ENCODE measurements at regions of chr11 and their contacts with region 1.

Region 1: GRCh38 chr11:65027213-65028067 is at the start of gene SNX15:
- DNase-seq: peak; percentile 80
- ATAC-seq: peak; percentile 98
- H3K4me3 ChIP-seq: peak within 1 kb of the TSS; percentile 65
- H3K27ac ChIP-seq: peak within 1 kb of the TSS; percentile 74
- H3K4me1 ChIP-seq: peaks cover 8% of the 10 kb centered on the region; the same call in 1 of the 2 replicates
- H3K27me3 ChIP-seq: no peaks in the 10 kb centered on the region
- CTCF ChIP-seq: peak; percentile 29 to 45 (median 37); a peak in 4 of 6 replicates
- EP300 ChIP-seq: no peak
- POLR2A ChIP-seq: peak; percentile 78
- RAD21 ChIP-seq: peak; percentile 28; the same call in 1 of the 2 replicates
- polyA plus RNA-seq, gene SNX15: 2.4 to 3.3 TPM

Region 2: DNA sequence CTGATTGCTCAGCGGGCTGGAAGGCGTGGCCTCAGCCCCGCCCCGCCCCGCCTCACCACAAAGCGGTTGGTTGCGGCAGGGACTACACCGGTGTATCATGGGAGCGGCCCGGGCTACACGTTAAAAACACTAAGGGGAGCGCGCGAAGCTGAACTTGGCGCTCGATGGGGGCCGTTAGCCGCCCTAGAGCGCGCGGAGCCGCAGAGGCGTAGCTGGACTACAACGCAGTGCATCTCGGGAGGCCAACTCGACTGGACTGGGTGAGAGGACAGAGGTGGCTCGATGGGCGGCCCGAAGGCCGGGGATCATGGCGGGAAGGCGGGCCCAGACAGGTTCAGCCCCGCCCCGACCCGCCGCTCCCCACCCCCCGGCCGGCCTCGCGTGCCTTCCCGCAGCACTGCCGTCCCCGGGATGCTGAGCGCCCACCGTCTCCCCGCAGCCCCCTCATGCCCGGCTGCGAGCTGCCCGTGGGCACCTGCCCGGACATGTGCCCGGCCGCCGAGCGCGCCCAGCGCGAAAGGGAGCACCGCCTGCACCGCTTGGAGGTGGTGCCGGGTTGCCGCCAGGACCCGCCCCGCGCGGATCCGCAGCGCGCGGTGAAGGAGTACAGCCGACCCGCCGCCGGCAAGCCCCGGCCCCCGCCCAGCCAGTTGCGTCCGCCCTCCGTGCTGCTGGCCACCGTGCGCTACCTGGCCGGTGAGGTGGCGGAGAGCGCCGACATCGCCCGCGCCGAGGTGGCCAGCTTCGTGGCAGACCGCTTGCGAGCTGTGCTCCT is 13.6 kb after region 1 on chr11 and contains the start of gene SAC3D1:
- CTCF ChIA-PET with region 1: interaction called, 4 read pairs
- POLR2A ChIA-PET with region 1: interaction called, 12 read pairs
- RAD21 ChIA-PET with region 1: interaction called, 6 read pairs
- SMC1A ChIA-PET with region 1: interaction called, 10 read pairs
- in situ Hi-C with region 1: no loop called
- intact Hi-C with region 1: no loop called
- DNase-seq: peak; percentile 86
- ATAC-seq: peak; percentile 98
- H3K4me3 ChIP-seq: peak within 1 kb of the TSS; percentile 81
- H3K27ac ChIP-seq: peak within 1 kb of the TSS; percentile 85
- H3K4me1 ChIP-seq: peaks cover 17% of the 10 kb centered on the region
- H3K27me3 ChIP-seq: no peaks in the 10 kb centered on the region
- CTCF ChIP-seq: no peak
- EP300 ChIP-seq: no peak
- POLR2A ChIP-seq: peak; percentile 71
- RAD21 ChIP-seq: no peak
- polyA plus RNA-seq, gene SAC3D1: 0.16 to 1.7 TPM